ENCODE measurements at regions of chr11 and their contacts with region 1.

Region 1: GRCh38 chr11:111549196-111549868 is 8.8 kb downstream of the LAYN start:
- DNase-seq: no peak
- H3K4me3 ChIP-seq: no peak overlapping the region
- H3K27ac ChIP-seq: no peak overlapping the region
- H3K4me1 ChIP-seq: no peaks in the 10 kb centered on the region
- H3K27me3 ChIP-seq: peaks cover 13 to 22% of the 10 kb centered on the region in 2 experiments
- CTCF ChIP-seq: no peak
- POLR2A ChIP-seq: no peak

Region 2: GRCh38 chr11:111565114-111565720 is 15.9 kb after region 1 on chr11:
- CTCF ChIA-PET with region 1: interaction called, 15 read pairs
- POLR2A ChIA-PET with region 1: no interaction called
- dilution Hi-C with region 1: no loop called
- intact Hi-C with region 1: no loop called
- DNase-seq: peak; percentile 77
- H3K4me3 ChIP-seq: no peak overlapping the region
- H3K27ac ChIP-seq: no peak overlapping the region
- H3K4me1 ChIP-seq: no peaks in the 10 kb centered on the region
- H3K27me3 ChIP-seq: no peaks in the 10 kb centered on the region
- CTCF ChIP-seq: peak; percentile 62 to 74
- POLR2A ChIP-seq: no peak